PC-9 (cell line): ENCODE measurements at regions of chr10 and their contacts with region 1.

Region 1: GRCh38 chr10:97334370-97335175 is at the start of gene FRAT2:
- DNase-seq: peak; percentile 59 to 80
- H3K4me3 ChIP-seq: peak within 1 kb of the TSS; percentile 81
- H3K27ac ChIP-seq: peak within 1 kb of the TSS; percentile 75
- H3K4me1 ChIP-seq: peaks cover 41% of the 10 kb centered on the region
- H3K27me3 ChIP-seq: no peaks in the 10 kb centered on the region
- CTCF ChIP-seq: no peak
- total RNA-seq, gene FRAT2: 11.0 and 13.0 TPM in 2 replicates

Region 2: DNA sequence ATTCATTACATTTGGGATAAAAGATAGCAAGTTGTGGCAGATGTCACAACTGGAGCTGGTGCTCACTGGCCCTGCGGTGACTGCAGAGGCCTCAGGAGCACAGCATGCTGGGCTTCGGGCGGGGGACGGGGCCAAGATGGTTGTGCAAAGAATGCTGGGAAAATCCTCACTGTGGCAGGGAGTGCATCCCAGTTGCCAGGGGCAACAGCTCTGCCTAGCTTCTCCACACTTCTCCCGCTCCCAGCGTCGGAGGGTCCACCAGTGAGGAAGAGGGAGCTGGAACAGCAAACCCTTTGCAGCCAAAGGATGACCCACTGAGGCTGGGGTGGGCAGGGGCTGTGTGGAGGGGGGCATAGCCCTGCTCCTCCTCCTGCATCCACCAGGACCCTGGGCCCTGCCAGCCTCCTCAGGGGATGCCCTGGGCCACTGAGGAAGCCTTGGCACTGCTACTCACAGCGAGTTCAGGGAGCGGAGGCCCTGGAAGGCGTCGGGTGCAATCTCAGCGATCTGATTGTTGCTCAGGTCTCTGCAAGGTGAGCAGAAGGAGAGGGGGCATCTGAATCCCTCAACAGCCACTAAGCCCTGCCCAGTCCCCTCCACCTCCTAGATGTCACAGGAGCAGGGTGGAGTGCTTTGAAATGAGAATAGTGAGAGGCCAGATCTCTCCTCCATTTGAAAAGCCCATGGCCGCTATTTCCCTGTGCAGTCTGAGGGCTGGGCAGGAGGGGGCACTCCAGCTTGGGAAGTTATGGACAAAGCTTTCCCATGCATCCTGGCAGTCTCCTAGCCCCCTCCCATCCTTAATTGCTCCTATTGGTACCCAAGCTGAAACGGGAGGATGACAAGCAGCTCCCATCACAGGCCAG is 275.3 kb before region 1 on chr10:
- CTCF ChIA-PET with region 1: no interaction called
- POLR2A ChIA-PET with region 1: no interaction called
- intact Hi-C with region 1: no loop called
- DNase-seq: no peak
- H3K4me3 ChIP-seq: no peak overlapping the region
- H3K27ac ChIP-seq: no peak overlapping the region
- H3K4me1 ChIP-seq: no peaks in the 10 kb centered on the region
- H3K27me3 ChIP-seq: no peaks in the 10 kb centered on the region
- CTCF ChIP-seq: no peak

Region 3: GRCh38 chr10:97267671-97268070 is 66.9 kb before region 1 on chr10:
- CTCF ChIA-PET with region 1: no interaction called
- POLR2A ChIA-PET with region 1: no interaction called
- intact Hi-C with region 1: no loop called
- DNase-seq: no peak
- H3K4me3 ChIP-seq: no peak overlapping the region
- H3K27ac ChIP-seq: no peak overlapping the region
- H3K4me1 ChIP-seq: no peaks in the 10 kb centered on the region
- H3K27me3 ChIP-seq: no peaks in the 10 kb centered on the region
- CTCF ChIP-seq: no peak

Region 4: DNA sequence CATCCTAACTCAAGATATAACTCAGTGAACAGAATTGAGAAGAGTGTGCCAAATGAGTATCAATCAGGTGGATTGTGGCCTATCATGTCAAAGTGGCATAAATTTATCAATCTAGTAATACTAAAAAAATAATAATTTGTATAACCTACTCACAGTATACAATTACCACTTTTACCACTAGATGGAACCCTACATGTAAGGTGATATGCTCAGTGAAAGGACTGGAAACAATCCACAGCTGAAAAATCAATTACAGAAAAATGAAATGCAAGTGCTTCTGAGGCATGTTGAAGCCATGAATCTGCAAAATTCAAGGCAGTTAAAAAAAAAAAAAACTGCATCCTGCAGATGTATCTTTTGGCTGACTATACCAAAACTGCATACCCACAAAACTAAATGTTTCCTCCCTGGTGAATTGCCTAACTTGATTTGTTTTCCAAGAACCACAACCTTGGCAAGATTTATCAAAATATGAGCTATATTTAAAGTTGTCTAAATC is 56.0 kb before region 1 on chr10:
- CTCF ChIA-PET with region 1: interaction called, 7 read pairs
- POLR2A ChIA-PET with region 1: interaction called, 3 read pairs
- intact Hi-C with region 1: loop called (anchors 5 kb)
- DNase-seq: peak in 1 of 2 experiments; percentile 57
- H3K4me3 ChIP-seq: no peak overlapping the region
- H3K27ac ChIP-seq: peak overlapping the region; percentile 45
- H3K4me1 ChIP-seq: peaks cover 19% of the 10 kb centered on the region
- H3K27me3 ChIP-seq: no peaks in the 10 kb centered on the region
- CTCF ChIP-seq: peak; percentile 63

Region 5: GRCh38 chr10:97292097-97292862 is 42.3 kb before region 1 on chr10 and contains the start of gene ARHGAP19:
- CTCF ChIA-PET with region 1: interaction called, 15 read pairs
- POLR2A ChIA-PET with region 1: interaction called, 3 read pairs
- intact Hi-C with region 1: loop called (anchors 5 kb)
- DNase-seq: peak; percentile 89 to 93
- H3K4me3 ChIP-seq: peak within 1 kb of the TSS; percentile 61
- H3K27ac ChIP-seq: peak within 1 kb of the TSS; percentile 54
- H3K4me1 ChIP-seq: no peaks in the 10 kb centered on the region; the same call in 1 of the 2 replicates
- H3K27me3 ChIP-seq: no peaks in the 10 kb centered on the region
- CTCF ChIP-seq: no peak; the same call in 1 of the 2 replicates
- total RNA-seq, gene ARHGAP19: 11.2 and 11.5 TPM in 2 replicates

Region 6: GRCh38 chr10:97445722-97446639 is 111.4 kb after region 1 on chr10 and contains the starts of genes EXOSC1 and ZDHHC16:
- CTCF ChIA-PET with region 1: no interaction called
- POLR2A ChIA-PET with region 1: no interaction called
- intact Hi-C with region 1: loop called (anchors 5 kb)
- DNase-seq: peak; percentile 85 to 87
- H3K4me3 ChIP-seq: peak within 1 kb of the TSS; percentile 97
- H3K27ac ChIP-seq: no peak within 1 kb of the TSS
- H3K4me1 ChIP-seq: peaks cover 30% of the 10 kb centered on the region
- H3K27me3 ChIP-seq: no peaks in the 10 kb centered on the region
- CTCF ChIP-seq: no peak
- total RNA-seq, gene EXOSC1: 25.4 and 27.0 TPM in 2 replicates
- total RNA-seq, gene ZDHHC16: 29.1 and 29.6 TPM in 2 replicates